Activated CD4-positive, alpha-beta T cell treated with anti-CD3 and anti-CD28 coated beads for 36 hours (primary cell): ENCODE measurements at regions of chr4 and their contacts with region 1.

Region 1: DNA sequence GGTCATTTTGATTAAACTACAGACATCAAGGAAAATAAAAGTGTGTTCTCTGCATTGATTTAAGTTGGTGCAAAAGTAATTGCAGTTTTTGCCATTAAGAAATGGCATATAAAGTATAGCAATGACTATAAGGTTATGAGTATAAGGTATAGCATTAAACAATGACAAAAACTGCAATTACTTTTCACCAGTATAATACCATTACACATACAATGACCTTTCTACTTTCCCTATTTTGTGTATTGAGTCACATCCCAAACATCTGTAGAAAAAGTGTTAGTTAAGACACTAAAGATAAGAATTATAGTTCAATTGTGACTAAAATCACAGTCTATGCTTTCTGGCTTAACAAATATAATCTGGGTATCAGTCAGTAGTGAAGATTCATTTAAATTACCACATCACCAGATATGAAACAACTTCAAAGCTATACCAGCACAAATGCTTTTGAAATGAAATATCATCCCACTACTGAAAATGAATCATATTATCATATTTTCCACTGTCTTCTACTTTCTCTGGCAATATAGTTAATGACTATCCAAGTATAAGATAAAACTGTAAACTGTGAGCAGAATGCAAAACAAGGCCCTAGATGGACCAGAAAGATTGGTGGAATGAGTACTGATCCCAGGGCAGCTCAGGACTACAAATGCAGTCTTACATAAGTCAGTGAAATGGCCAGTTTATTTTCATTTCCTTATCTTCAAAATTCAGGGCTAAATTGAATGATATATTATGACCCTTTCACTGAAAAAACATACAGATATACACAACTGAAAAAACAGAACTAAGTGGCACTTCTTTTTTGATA is 241.1 kb downstream of the ANTXR2 start:
- DNase-seq: no peak
- ATAC-seq: peak; percentile 89
- H3K4me3 Mint-ChIP-seq: no peak overlapping the region
- H3K27ac Mint-ChIP-seq: peak overlapping the region; percentile 3
- H3K4me1 Mint-ChIP-seq: peaks cover 10% of the 10 kb centered on the region
- H3K27me3 Mint-ChIP-seq: peaks cover 17% of the 10 kb centered on the region

Region 2: GRCh38 chr4:78938868-78939666 is 892.8 kb before region 1 on chr4 and contains the start of gene PAQR3:
- CTCF ChIA-PET with region 1: no interaction called
- POLR2A ChIA-PET with region 1: no interaction called
- intact Hi-C with region 1: loop called in 1 of 2 experiments (anchors 5 kb)
- DNase-seq: peak; percentile 91
- ATAC-seq: peak; percentile 95
- H3K4me3 Mint-ChIP-seq: peak within 1 kb of the TSS; percentile 88
- H3K27ac Mint-ChIP-seq: peak within 1 kb of the TSS; percentile 83
- H3K4me1 Mint-ChIP-seq: peaks cover 30% of the 10 kb centered on the region
- H3K27me3 Mint-ChIP-seq: peaks cover 8% of the 10 kb centered on the region
- total RNA-seq, gene PAQR3: 7.8 to 8.8 TPM

Region 3: DNA sequence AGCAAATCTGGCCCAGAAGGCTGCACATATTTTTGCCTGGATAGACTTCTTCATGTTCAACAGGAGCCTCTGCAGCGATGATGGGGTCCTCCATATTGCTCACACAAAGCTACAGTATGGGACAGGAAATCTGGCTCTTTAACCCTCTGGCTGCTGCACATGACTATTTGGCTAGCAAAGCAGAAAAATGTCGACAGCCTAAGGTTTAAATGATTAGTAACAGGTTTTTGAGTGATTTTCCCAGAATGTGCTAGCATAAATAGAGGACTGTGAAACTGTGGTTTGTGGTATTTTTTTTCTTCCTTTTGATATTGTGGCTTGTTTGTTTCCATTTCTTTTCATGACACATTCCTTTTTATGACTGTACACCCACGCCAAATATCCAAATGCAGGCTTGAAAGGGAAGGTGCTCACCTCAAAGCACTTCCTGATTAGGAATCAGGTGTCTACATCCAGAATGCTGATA is 303.6 kb before region 1 on chr4:
- CTCF ChIA-PET with region 1: no interaction called
- POLR2A ChIA-PET with region 1: no interaction called
- intact Hi-C with region 1: loop called in 1 of 2 experiments (anchors 5 kb)
- DNase-seq: peak; percentile 26
- ATAC-seq: peak; percentile 72
- H3K4me3 Mint-ChIP-seq: no peak overlapping the region
- H3K27ac Mint-ChIP-seq: no peak overlapping the region
- H3K4me1 Mint-ChIP-seq: peaks cover 14% of the 10 kb centered on the region
- H3K27me3 Mint-ChIP-seq: peaks cover 13% of the 10 kb centered on the region

Region 4: GRCh38 chr4:79780811-79781210 is 51.1 kb before region 1 on chr4:
- CTCF ChIA-PET with region 1: no interaction called
- POLR2A ChIA-PET with region 1: no interaction called
- intact Hi-C with region 1: loop called in 1 of 2 experiments (anchors 1 kb)
- DNase-seq: no peak
- ATAC-seq: no peak
- H3K4me3 Mint-ChIP-seq: no peak overlapping the region
- H3K27ac Mint-ChIP-seq: no peak overlapping the region
- H3K4me1 Mint-ChIP-seq: no peaks in the 10 kb centered on the region
- H3K27me3 Mint-ChIP-seq: peaks cover 4% of the 10 kb centered on the region

Region 5: GRCh38 chr4:80007745-80008149 is 175.8 kb after region 1 on chr4:
- CTCF ChIA-PET with region 1: no interaction called
- POLR2A ChIA-PET with region 1: no interaction called
- intact Hi-C with region 1: loop called in 1 of 2 experiments (anchors 10 kb)
- DNase-seq: no peak
- ATAC-seq: peak; percentile 68
- H3K4me3 Mint-ChIP-seq: no peak overlapping the region
- H3K27ac Mint-ChIP-seq: peak overlapping the region; percentile 67
- H3K4me1 Mint-ChIP-seq: peaks cover 43% of the 10 kb centered on the region
- H3K27me3 Mint-ChIP-seq: no peaks in the 10 kb centered on the region

Region 6: DNA sequence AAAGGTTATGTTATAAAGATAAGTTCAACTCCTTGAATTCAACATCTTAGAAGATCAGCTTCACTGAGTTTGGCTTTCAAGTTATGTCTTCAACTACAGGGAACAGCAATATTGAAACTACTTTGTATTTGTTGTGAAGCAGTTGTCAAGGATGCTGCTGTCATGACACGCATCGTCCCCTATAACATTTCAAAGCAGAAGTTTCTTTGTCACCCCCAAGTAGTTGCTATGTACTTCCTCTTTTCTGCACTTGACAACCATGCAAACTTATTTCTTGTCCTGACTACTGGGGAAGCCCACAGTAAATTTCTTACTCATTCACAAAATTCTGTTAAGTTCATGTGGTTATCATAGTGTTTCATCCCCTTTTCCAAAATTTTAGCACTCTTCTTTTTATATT is 226.8 kb after region 1 on chr4:
- CTCF ChIA-PET with region 1: no interaction called
- POLR2A ChIA-PET with region 1: no interaction called
- intact Hi-C with region 1: loop called in 1 of 2 experiments (anchors 5 kb)
- DNase-seq: peak; percentile 59
- ATAC-seq: peak; percentile 86
- H3K4me3 Mint-ChIP-seq: peak overlapping the region; percentile 68
- H3K27ac Mint-ChIP-seq: peak overlapping the region; percentile 89
- H3K4me1 Mint-ChIP-seq: peaks cover 54% of the 10 kb centered on the region
- H3K27me3 Mint-ChIP-seq: no peaks in the 10 kb centered on the region

Region 7: GRCh38 chr4:80202190-80202711 is 370.3 kb after region 1 on chr4:
- CTCF ChIA-PET with region 1: no interaction called
- POLR2A ChIA-PET with region 1: no interaction called
- intact Hi-C with region 1: loop called in 1 of 2 experiments (anchors 10 kb)
- DNase-seq: peak; percentile 88
- ATAC-seq: peak; percentile 66
- H3K4me3 Mint-ChIP-seq: peak overlapping the region; percentile 68
- H3K27ac Mint-ChIP-seq: peak overlapping the region; percentile 64
- H3K4me1 Mint-ChIP-seq: peaks cover 30% of the 10 kb centered on the region
- H3K27me3 Mint-ChIP-seq: peaks cover 17% of the 10 kb centered on the region